Prostate gland (tissue), 2 donors: ENCODE measurements at regions of chr17 and their contacts with region 1.

Region 1: GRCh38 chr17:42116705-42117396 is 4.3 kb downstream of the KAT2A start:
- DNase-seq: peak; percentile 86
- H3K4me3 ChIP-seq: no peak overlapping the region
- H3K27ac ChIP-seq: no peak overlapping the region
- H3K4me1 ChIP-seq: peaks cover 8% of the 10 kb centered on the region
- H3K27me3 ChIP-seq: no peaks in the 10 kb centered on the region
- CTCF ChIP-seq: peak; percentile 81 to 94 (median 87)
- POLR2A ChIP-seq: no peak

Region 2: DNA sequence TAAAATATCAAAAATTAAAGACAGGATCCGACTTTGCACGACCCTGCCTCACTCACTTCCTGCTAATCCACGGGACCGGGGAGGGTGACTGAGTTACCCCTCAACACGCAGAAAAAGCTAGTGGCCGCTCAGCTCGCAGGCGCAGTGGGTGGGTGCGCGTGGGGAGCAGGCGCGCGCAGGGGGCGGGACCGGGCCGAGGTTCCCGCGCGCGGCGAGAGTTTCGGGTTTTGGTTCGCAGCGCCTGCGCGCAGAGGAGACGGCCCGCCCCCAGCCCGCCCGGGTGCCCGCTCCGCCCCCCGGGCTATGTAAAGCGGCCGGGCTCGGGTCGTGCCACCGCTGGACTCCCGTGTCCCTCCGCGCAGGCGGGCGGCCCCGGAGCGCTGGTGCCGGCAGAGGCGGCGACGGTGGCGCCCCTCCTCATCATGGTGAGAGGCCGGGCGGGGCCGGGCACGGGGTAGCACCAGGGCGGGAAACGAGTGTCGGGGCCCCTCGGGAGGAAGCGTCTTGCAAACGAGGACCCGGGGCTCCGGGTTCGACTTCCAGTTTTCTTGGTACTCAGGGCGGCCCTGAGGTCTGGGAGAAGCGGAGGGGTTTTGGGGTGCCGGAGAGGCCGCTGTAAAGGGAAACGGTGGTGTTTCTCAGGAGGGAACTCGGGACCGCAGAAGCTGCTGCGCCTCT is 150.2 kb before region 1 on chr17 and contains the start of gene CNP:
- intact Hi-C with region 1: loop called (anchors 1 kb)
- DNase-seq: peak; percentile 88
- H3K4me3 ChIP-seq: peak within 1 kb of the TSS; percentile 72 to 92
- H3K27ac ChIP-seq: peak within 1 kb of the TSS; percentile 84 to 91
- H3K4me1 ChIP-seq: peaks cover 18% of the 10 kb centered on the region
- H3K27me3 ChIP-seq: no peaks in the 10 kb centered on the region
- CTCF ChIP-seq: peak in 2 of 4 experiments; percentile 5 to 30
- POLR2A ChIP-seq: peak; percentile 93
- total RNA-seq, gene CNP: 85.8 to 117 TPM

Region 3: GRCh38 chr17:42025191-42025579 is 91.7 kb before region 1 on chr17:
- intact Hi-C with region 1: loop called (anchors 1 kb)
- DNase-seq: no peak
- H3K4me3 ChIP-seq: no peak overlapping the region
- H3K27ac ChIP-seq: peak overlapping the region; percentile 8 to 22
- H3K4me1 ChIP-seq: peaks cover 5% of the 10 kb centered on the region
- H3K27me3 ChIP-seq: no peaks in the 10 kb centered on the region
- CTCF ChIP-seq: no peak
- POLR2A ChIP-seq: no peak

Region 4: DNA sequence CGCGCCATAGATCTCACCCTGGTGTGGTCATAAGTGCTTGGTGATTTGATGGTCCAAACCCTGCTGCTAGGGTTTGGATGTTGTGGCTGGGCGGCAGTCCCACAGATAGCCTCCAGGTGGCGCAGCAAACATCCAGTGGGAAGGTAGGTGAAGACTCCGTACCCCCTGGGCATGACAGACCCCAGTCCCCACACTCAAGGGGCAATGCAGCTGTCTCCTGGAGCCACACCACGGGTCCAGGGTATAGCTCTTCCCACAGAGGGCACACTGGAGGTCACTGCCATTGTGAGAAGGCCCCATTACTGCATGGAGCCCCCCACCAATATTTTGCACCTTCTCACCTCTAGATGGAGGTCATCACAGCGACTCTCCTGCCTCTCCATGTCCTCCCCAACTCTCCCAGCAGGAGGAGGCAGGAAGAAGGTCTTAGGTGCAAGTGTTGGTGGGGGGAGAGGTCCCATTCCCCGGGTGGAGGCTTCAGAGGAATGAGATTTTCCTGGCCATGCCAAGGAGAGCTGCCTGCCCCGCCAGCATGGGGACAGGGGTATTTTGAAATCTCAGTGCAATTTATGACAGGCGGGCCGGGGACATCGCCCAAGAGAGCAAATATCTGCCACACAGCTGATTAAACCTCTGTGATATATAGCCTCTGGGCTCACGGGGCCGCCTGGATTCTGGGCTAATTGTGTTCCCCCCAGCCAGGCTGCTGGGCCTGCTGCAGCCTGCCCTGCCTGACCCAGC is 49.3 kb before region 1 on chr17:
- intact Hi-C with region 1: loop called (anchors 5 kb)
- DNase-seq: peak; percentile 61
- H3K4me3 ChIP-seq: no peak overlapping the region
- H3K27ac ChIP-seq: no peak overlapping the region
- H3K4me1 ChIP-seq: no peaks in the 10 kb centered on the region
- H3K27me3 ChIP-seq: no peaks in the 10 kb centered on the region
- CTCF ChIP-seq: peak; percentile 76 to 86 (median 82)
- POLR2A ChIP-seq: no peak

Region 5: DNA sequence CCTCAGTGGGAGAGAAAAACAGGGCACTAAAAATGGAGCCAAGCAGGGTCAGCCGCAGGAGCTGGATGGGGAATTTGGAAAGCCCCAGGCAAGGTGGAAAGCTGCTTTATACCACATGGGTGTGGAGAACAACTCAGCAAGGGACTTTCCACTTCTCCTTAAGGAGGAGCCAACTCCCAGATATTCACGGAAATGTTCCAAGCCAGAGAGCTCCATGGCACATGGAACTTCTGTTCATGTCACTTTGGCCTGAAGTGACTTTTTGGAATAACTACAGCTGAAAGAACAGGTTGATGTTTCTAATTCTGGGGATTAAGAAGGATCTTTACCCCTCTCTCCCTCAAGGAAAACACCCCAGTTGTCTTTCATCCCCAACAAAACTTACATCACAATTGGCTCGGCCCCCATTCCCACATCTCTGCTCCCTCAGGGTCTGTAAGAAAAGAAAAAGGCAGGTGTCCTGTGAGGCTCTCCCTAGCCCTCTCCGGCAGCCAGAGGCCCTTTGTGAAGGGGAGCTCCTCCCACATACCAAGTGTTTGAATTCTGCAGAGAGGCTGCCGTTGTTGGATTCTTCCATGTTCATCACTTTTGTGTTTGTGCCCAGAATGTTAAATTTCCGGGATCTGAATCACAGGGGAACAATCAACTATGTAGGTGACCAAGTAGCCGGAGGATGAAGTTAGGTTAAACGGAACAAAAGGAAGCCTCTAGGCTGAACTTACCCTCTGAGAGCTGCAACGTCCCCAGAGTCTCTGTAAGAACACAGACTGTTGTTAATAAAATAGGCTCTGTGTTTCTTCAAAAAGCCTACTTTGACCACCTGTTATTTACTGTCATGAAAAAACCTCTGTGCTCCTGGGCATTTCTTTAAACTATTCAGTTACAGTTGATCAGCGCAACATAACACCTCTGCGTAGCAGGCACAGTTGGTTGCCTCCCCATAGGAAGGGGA is 212.4 kb after region 1 on chr17:
- intact Hi-C with region 1: no loop called
- DNase-seq: peak; percentile 43
- H3K4me3 ChIP-seq: no peak overlapping the region
- H3K27ac ChIP-seq: peak overlapping the region; percentile 49 to 51
- H3K4me1 ChIP-seq: no peaks in the 10 kb centered on the region
- H3K27me3 ChIP-seq: no peaks in the 10 kb centered on the region
- CTCF ChIP-seq: no peak
- POLR2A ChIP-seq: no peak

Region 6: GRCh38 chr17:42744806-42745617 is 628.2 kb after region 1 on chr17 and contains the start of gene EZH1:
- intact Hi-C with region 1: no loop called
- DNase-seq: peak; percentile 87
- H3K4me3 ChIP-seq: peak within 1 kb of the TSS; percentile 70 to 73
- H3K27ac ChIP-seq: peak within 1 kb of the TSS; percentile 96 to 97
- H3K4me1 ChIP-seq: peaks cover 17% of the 10 kb centered on the region
- H3K27me3 ChIP-seq: no peaks in the 10 kb centered on the region
- CTCF ChIP-seq: peak in 2 of 4 experiments; percentile 54 to 56
- POLR2A ChIP-seq: peak; percentile 76
- total RNA-seq, gene EZH1: 28.5 to 61.2 TPM